ENCODE measurements at regions of chr1 and their contacts with region 1.

Region 1: GRCh38 chr1:28208818-28209441 is 23.9 kb downstream of the DNAJC8 start:
- DNase-seq: peak; percentile 51
- H3K4me3 ChIP-seq: no peak overlapping the region
- H3K27ac ChIP-seq: no peak overlapping the region
- H3K27me3 ChIP-seq: no peaks in the 10 kb centered on the region
- CTCF ChIP-seq: peak; percentile 90

Region 2: GRCh38 chr1:28078680-28079626 is 130.0 kb before region 1 on chr1:
- CTCF ChIA-PET with region 1: interaction called, 10 read pairs
- POLR2A ChIA-PET with region 1: no interaction called
- DNase-seq: no peak
- H3K4me3 ChIP-seq: no peak overlapping the region
- H3K27ac ChIP-seq: no peak overlapping the region
- H3K27me3 ChIP-seq: no peaks in the 10 kb centered on the region
- CTCF ChIP-seq: no peak

Region 3: GRCh38 chr1:28088168-28088961 is 120.6 kb before region 1 on chr1 and contains the start of gene EYA3:
- CTCF ChIA-PET with region 1: interaction called, 301 read pairs
- POLR2A ChIA-PET with region 1: interaction called, 15 read pairs
- DNase-seq: peak; percentile 94
- H3K4me3 ChIP-seq: peak within 1 kb of the TSS; percentile 80
- H3K27ac ChIP-seq: peak within 1 kb of the TSS; percentile 87
- H3K27me3 ChIP-seq: no peaks in the 10 kb centered on the region
- CTCF ChIP-seq: no peak
- polyA plus RNA-seq, gene EYA3: 15.4 and 17.0 TPM in 2 replicates

Region 4: GRCh38 chr1:28160782-28161266 is 48.1 kb before region 1 on chr1:
- CTCF ChIA-PET with region 1: interaction called, 12 read pairs
- POLR2A ChIA-PET with region 1: no interaction called
- DNase-seq: peak; percentile 65
- H3K4me3 ChIP-seq: no peak overlapping the region
- H3K27ac ChIP-seq: peak overlapping the region; percentile 89
- H3K27me3 ChIP-seq: no peaks in the 10 kb centered on the region
- CTCF ChIP-seq: no peak

Measured in AG04450 (cell line).